Activated CD4-positive, alpha-beta memory T cell treated with anti-CD3 and anti-CD28 coated beads for 36 hours (primary cell): ENCODE measurements at regions of chr1 and their contacts with region 1.

Region 1: GRCh38 chr1:212455803-212456528 is 23.2 kb downstream of the NENF start:
- DNase-seq: peak; percentile 88
- H3K4me3 Mint-ChIP-seq: no peak overlapping the region
- H3K27ac Mint-ChIP-seq: no peak overlapping the region
- H3K4me1 Mint-ChIP-seq: peaks cover 3% of the 10 kb centered on the region
- H3K27me3 Mint-ChIP-seq: no peaks in the 10 kb centered on the region

Region 2: GRCh38 chr1:212012034-212012740 is 443.8 kb before region 1 on chr1:
- CTCF ChIA-PET with region 1: interaction called, 14 read pairs
- POLR2A ChIA-PET with region 1: no interaction called
- intact Hi-C with region 1: loop called (anchors 2 kb)
- DNase-seq: peak; percentile 78
- H3K4me3 Mint-ChIP-seq: no peak overlapping the region
- H3K27ac Mint-ChIP-seq: no peak overlapping the region
- H3K4me1 Mint-ChIP-seq: no peaks in the 10 kb centered on the region
- H3K27me3 Mint-ChIP-seq: no peaks in the 10 kb centered on the region

Region 3: GRCh38 chr1:212070720-212071302 is 385.2 kb before region 1 on chr1:
- CTCF ChIA-PET with region 1: interaction called, 111 read pairs
- POLR2A ChIA-PET with region 1: no interaction called
- intact Hi-C with region 1: no loop called
- DNase-seq: no peak
- H3K4me3 Mint-ChIP-seq: no peak overlapping the region
- H3K27ac Mint-ChIP-seq: peak overlapping the region; percentile 32
- H3K4me1 Mint-ChIP-seq: no peaks in the 10 kb centered on the region
- H3K27me3 Mint-ChIP-seq: no peaks in the 10 kb centered on the region

Region 4: DNA sequence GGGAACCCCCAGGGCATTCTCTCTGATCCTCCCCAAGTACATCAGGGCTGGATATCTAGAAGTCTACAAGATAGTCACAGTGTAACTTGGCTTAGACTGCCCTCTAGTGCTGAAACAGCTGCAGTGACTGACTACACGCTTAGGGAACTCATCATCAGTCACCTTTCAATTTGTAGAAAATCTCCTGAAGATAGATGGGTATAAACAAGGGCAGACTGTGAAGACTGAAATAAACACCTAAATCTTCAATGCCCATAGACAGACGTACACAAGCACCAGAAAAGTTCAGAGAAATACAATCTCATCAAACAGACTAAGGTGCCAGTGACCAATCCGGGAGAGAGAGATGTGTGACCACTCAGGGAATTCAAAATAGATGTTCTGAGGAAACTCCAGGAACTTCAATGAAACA is 87.9 kb before region 1 on chr1:
- CTCF ChIA-PET with region 1: interaction called, 59 read pairs
- POLR2A ChIA-PET with region 1: no interaction called
- intact Hi-C with region 1: loop called (anchors 5 kb)
- DNase-seq: peak; percentile 64
- H3K4me3 Mint-ChIP-seq: no peak overlapping the region
- H3K27ac Mint-ChIP-seq: peak overlapping the region; percentile 56
- H3K4me1 Mint-ChIP-seq: no peaks in the 10 kb centered on the region
- H3K27me3 Mint-ChIP-seq: no peaks in the 10 kb centered on the region

Region 5: DNA sequence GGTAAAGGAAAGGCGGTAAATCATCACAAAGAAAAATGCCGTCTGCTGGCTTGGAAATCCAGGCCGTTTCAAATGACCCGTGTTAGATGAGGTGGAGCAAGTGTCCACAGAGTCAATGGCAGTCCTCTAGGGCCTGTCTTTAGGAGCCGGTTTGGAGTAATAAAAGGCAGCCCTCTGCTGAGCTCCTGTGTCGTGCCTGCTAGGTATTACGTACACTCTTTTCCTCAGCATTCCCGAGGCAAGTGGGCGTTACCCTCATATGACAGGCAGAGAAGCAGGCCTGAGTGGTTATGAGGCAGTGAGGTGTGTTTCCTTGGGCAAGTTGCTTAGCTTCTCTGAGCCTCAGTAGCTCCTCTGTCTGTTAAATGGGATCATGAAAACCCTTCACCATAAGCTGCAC is 15.5 kb before region 1 on chr1:
- CTCF ChIA-PET with region 1: interaction called, 24 read pairs
- POLR2A ChIA-PET with region 1: no interaction called
- intact Hi-C with region 1: no loop called
- DNase-seq: no peak
- H3K4me3 Mint-ChIP-seq: no peak overlapping the region
- H3K27ac Mint-ChIP-seq: no peak overlapping the region
- H3K4me1 Mint-ChIP-seq: peaks cover 7% of the 10 kb centered on the region
- H3K27me3 Mint-ChIP-seq: no peaks in the 10 kb centered on the region

Region 6: DNA sequence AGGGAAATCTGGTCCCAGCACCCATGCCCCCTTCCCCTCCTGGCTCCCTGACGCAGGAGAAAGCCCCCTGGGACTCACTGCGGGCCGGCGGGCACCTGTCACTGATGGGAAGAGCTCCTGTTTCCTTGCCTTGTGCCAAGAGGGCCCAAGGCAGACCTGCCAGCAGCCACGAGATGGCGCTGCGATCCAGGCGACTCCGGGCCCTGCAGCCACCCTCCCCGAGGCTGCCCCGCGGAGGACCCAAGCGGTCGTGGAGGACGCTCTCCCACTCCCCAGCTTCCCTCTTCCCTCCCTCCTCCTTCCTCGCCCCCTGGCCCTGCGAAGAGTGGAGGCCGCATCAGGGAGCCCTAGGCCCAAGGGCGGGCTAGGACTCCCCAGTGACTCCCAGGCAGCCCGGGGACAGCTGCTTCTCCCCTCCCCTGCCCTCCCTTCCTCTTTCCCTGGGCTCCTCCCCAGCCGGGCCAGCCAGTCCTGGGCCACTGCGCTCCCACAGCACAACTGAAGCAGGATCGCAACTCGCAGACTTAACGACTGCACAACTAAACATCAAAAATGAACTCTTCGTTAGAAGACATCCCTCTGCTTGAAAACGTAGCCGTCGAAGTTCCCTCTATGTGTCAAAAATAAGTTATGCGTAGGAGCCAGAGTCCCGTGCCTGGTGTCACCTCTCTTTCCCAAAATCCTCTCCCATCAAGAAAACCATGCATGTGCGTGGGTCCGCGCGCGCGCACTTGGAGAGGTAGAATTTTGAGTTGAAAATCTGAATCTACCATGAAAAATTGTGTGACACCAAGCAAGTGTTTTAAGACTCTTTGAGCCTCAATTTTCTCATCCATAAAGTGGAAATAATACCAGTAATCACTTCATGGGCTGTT is 209.5 kb after region 1 on chr1:
- CTCF ChIA-PET with region 1: interaction called, 15 read pairs
- POLR2A ChIA-PET with region 1: no interaction called
- intact Hi-C with region 1: loop called (anchors 1 kb)
- DNase-seq: peak; percentile 88
- H3K4me3 Mint-ChIP-seq: peak overlapping the region; percentile 73
- H3K27ac Mint-ChIP-seq: peak overlapping the region; percentile 57
- H3K4me1 Mint-ChIP-seq: peaks cover 19% of the 10 kb centered on the region
- H3K27me3 Mint-ChIP-seq: peaks cover 3% of the 10 kb centered on the region

Region 7: GRCh38 chr1:213003256-213003655 is 547.3 kb after region 1 on chr1:
- CTCF ChIA-PET with region 1: interaction called, 17 read pairs
- POLR2A ChIA-PET with region 1: no interaction called
- intact Hi-C with region 1: no loop called
- DNase-seq: peak; percentile 48
- H3K4me3 Mint-ChIP-seq: no peak overlapping the region
- H3K27ac Mint-ChIP-seq: peak overlapping the region; percentile 57
- H3K4me1 Mint-ChIP-seq: peaks cover 13% of the 10 kb centered on the region
- H3K27me3 Mint-ChIP-seq: no peaks in the 10 kb centered on the region